Activated naive CD4-positive, alpha-beta T cell treated with anti-CD3 and anti-CD28 coated beads for 36 hours (primary cell): ENCODE measurements at regions of chr9 and their contacts with region 1.

Region 1: GRCh38 chr9:34222451-34222850 is 43.6 kb downstream of the UBAP1 start:
- DNase-seq: no peak
- H3K4me3 Mint-ChIP-seq: no peak overlapping the region
- H3K27ac Mint-ChIP-seq: no peak overlapping the region
- H3K4me1 Mint-ChIP-seq: peaks cover 8% of the 10 kb centered on the region
- H3K27me3 Mint-ChIP-seq: no peaks in the 10 kb centered on the region

Region 2: DNA sequence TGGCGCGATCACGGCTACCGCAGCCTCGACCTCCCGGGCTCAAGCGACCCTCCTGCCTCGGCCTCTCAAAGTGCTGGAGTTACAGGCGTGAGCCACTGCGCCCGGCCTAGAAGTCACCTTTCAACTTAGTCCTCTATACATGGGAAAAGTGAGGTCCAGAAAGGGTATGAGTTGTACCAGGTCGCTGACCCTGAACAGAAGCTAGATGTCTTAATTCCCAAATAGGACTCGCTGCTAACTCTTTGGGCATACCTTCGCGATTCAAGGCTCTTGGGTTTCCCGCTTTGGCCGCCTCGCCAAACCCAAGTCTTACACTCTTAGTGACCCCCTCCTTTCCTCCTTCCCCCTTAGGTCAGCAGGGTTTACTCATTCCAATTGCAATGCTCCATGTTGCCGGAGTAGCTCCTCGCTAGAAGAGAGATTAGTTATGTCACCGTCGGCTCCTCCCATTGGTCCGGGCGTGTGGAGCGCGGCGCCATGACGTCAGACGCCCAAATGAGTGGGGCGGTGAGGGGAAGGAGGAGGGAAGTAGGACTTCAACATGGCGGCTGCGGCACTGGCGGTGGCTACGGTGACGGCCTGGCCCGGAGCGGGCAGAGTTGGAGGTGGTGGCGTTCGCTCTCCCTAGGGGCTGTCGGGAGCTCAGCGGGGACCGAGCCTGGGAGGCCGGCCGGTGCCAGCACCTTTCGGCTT is 43.8 kb before region 1 on chr9 and contains the start of gene UBAP1:
- CTCF ChIA-PET with region 1: no interaction called
- intact Hi-C with region 1: no loop called
- DNase-seq: peak; percentile 99
- H3K4me3 Mint-ChIP-seq: peak within 1 kb of the TSS; percentile 84
- H3K27ac Mint-ChIP-seq: peak within 1 kb of the TSS; percentile 94
- H3K4me1 Mint-ChIP-seq: peaks cover 16% of the 10 kb centered on the region
- H3K27me3 Mint-ChIP-seq: no peaks in the 10 kb centered on the region
- total RNA-seq, gene UBAP1: 29.9 to 31.7 TPM

Region 3: GRCh38 chr9:34190996-34191892 is 31.2 kb before region 1 on chr9:
- CTCF ChIA-PET with region 1: no interaction called
- intact Hi-C with region 1: no loop called
- DNase-seq: no peak
- H3K4me3 Mint-ChIP-seq: no peak overlapping the region
- H3K27ac Mint-ChIP-seq: no peak overlapping the region
- H3K4me1 Mint-ChIP-seq: peaks cover 40% of the 10 kb centered on the region
- H3K27me3 Mint-ChIP-seq: no peaks in the 10 kb centered on the region

Region 4: DNA sequence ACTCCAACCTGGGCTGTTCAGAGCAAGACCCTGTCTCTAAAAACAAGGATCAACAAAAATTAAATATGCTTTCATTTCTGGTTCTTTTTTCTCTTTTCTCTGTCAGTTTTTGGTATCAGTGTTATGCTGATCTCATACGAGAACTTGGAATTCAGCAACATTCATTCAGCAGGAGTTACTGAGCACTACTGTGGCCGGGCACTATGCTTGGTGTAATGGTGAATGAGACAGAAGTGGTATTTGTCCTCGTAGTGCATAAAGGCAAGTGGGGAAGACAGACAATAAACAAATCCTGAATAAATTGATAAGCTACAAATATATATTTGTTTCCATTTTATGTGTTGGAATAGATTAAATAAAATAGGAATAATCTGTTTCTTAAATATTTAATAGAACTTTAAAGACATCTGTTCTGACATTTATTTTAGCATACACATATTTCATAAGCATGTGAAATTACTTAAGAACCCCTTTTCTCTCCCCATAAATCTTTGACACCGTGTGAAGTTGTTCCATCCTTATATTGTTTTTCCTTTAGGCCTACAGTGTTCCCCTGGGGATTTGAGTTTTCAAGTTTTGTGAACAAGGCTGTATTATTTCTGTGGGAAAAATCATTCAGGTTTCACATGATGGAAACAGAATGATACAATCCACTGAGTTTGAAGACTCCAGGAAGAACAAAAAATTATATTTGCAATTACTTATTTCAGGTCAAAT is 19.0 kb before region 1 on chr9:
- CTCF ChIA-PET with region 1: no interaction called
- intact Hi-C with region 1: no loop called
- DNase-seq: no peak
- H3K4me3 Mint-ChIP-seq: no peak overlapping the region
- H3K27ac Mint-ChIP-seq: no peak overlapping the region
- H3K4me1 Mint-ChIP-seq: peaks cover 25% of the 10 kb centered on the region
- H3K27me3 Mint-ChIP-seq: no peaks in the 10 kb centered on the region

Region 5: GRCh38 chr9:34310205-34310604 is 87.8 kb after region 1 on chr9:
- CTCF ChIA-PET with region 1: no interaction called
- intact Hi-C with region 1: loop called (anchors 10 kb)
- DNase-seq: no peak
- H3K4me3 Mint-ChIP-seq: no peak overlapping the region
- H3K27ac Mint-ChIP-seq: no peak overlapping the region
- H3K4me1 Mint-ChIP-seq: no peaks in the 10 kb centered on the region
- H3K27me3 Mint-ChIP-seq: no peaks in the 10 kb centered on the region

Region 6: GRCh38 chr9:34578241-34579103 is 356.0 kb after region 1 on chr9:
- CTCF ChIA-PET with region 1: no interaction called
- intact Hi-C with region 1: no loop called
- DNase-seq: peak; percentile 40
- H3K4me3 Mint-ChIP-seq: no peak overlapping the region
- H3K27ac Mint-ChIP-seq: no peak overlapping the region
- H3K4me1 Mint-ChIP-seq: peaks cover 8% of the 10 kb centered on the region
- H3K27me3 Mint-ChIP-seq: peaks cover 60% of the 10 kb centered on the region